ENCODE measurements at regions of chr16 and their contacts with region 1.

Region 1: GRCh38 chr16:81767987-81768592 is 11.0 kb upstream of the PLCG2 start:
- DNase-seq: no peak
- ATAC-seq: peak; percentile 70 to 87 (median 72)
- H3K4me3 ChIP-seq: no peak overlapping the region
- H3K27ac ChIP-seq: no peak overlapping the region
- H3K4me1 ChIP-seq: peaks cover 0 to 9% (median 0%) of the 10 kb centered on the region in 4 donors
- H3K27me3 ChIP-seq: no peaks in the 10 kb centered on the region
- CTCF ChIP-seq: no peak
- POLR2A ChIP-seq: no peak

Region 2: GRCh38 chr16:81885976-81886586 is 118.0 kb after region 1 on chr16:
- intact Hi-C with region 1: loop called in 1 of 2 experiments (anchors 10 kb)
- DNase-seq: no peak
- ATAC-seq: peak in 3 of 4 donors; percentile 30 to 48 (median 40)
- H3K4me3 ChIP-seq: no peak overlapping the region
- H3K27ac ChIP-seq: no peak overlapping the region
- H3K4me1 ChIP-seq: peaks cover 3 to 19% (median 7%) of the 10 kb centered on the region in 4 donors
- H3K27me3 ChIP-seq: no peaks in the 10 kb centered on the region
- CTCF ChIP-seq: peak; percentile 50 to 82 (median 78)
- POLR2A ChIP-seq: no peak